ENCODE measurements at regions of chr11 and their contacts with region 1.

Region 1: DNA sequence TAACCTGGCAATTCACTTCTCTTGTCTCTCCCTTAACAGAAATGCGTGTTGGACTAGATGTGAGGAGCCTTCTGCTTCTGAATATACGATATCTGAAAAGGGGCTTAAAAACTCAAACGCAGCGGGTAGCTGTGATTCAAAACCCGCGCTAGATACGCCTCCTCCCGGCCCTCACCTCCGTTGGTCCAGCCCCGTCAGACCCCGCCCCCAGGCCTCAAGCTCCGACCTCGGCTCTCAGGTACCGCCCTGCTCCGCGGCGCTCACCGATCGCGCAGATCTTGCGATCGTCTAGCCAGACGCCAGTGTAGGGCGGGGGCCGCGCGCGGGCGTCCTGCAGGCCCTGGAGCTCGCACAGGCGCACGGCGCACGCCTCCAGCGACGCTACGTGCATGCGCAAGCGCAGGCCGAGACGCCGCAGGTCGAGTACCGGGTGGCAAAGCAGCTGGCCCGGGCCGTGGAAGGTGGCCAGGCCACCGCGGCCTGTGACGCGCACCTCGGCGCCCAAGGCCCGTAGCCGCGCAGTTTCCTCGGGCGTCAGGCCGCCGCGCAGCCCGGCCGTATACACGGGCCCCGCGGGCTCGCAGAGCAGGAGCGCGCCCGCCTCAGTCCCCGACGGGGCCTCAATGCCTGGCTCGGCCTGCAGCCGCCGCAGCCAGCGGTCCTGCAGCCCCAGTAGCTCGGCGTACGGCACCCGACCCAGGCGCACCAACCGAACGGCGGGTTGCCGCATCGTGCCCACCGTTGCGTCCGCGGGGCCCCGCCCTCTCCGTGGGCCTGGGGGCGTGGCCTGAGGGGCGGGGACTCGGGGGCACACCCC is at the start of gene LIPT2:
- DNase-seq: peak; percentile 96 to 99
- H3K4me3 ChIP-seq: peak within 1 kb of the TSS; percentile 70
- H3K27ac ChIP-seq: peak within 1 kb of the TSS; percentile 82
- H3K4me1 ChIP-seq: peaks cover 23% of the 10 kb centered on the region
- H3K27me3 ChIP-seq: no peaks in the 10 kb centered on the region
- CTCF ChIP-seq: no peak
- total RNA-seq, gene LIPT2: 5.8 and 6.8 TPM in 2 replicates

Region 2: GRCh38 chr11:73463359-73463758 is 1029.8 kb before region 1 on chr11:
- CTCF ChIA-PET with region 1: interaction called, 3 read pairs
- POLR2A ChIA-PET with region 1: interaction called, 13 read pairs
- intact Hi-C with region 1: no loop called
- DNase-seq: no peak
- H3K4me3 ChIP-seq: no peak overlapping the region
- H3K27ac ChIP-seq: no peak overlapping the region
- H3K4me1 ChIP-seq: no peaks in the 10 kb centered on the region
- H3K27me3 ChIP-seq: no peaks in the 10 kb centered on the region
- CTCF ChIP-seq: no peak

Region 3: GRCh38 chr11:74577624-74578396 is 84.6 kb after region 1 on chr11:
- CTCF ChIA-PET with region 1: no interaction called
- POLR2A ChIA-PET with region 1: interaction called, 15 read pairs
- intact Hi-C with region 1: no loop called
- DNase-seq: no peak
- H3K4me3 ChIP-seq: no peak overlapping the region
- H3K27ac ChIP-seq: no peak overlapping the region
- H3K4me1 ChIP-seq: peaks cover 13% of the 10 kb centered on the region
- H3K27me3 ChIP-seq: no peaks in the 10 kb centered on the region
- CTCF ChIP-seq: no peak

Region 4: GRCh38 chr11:74650498-74650897 is 157.3 kb after region 1 on chr11:
- CTCF ChIA-PET with region 1: no interaction called
- POLR2A ChIA-PET with region 1: no interaction called
- intact Hi-C with region 1: no loop called
- DNase-seq: no peak
- H3K4me3 ChIP-seq: no peak overlapping the region
- H3K27ac ChIP-seq: no peak overlapping the region
- H3K4me1 ChIP-seq: no peaks in the 10 kb centered on the region
- H3K27me3 ChIP-seq: no peaks in the 10 kb centered on the region
- CTCF ChIP-seq: no peak

Measured in PC-9 (cell line).